Activated CD8-positive, alpha-beta T cell treated with anti-CD3 and anti-CD28 coated beads for 36 hours (primary cell): ENCODE measurements at regions of chr17 and their contacts with region 1.

Region 1: DNA sequence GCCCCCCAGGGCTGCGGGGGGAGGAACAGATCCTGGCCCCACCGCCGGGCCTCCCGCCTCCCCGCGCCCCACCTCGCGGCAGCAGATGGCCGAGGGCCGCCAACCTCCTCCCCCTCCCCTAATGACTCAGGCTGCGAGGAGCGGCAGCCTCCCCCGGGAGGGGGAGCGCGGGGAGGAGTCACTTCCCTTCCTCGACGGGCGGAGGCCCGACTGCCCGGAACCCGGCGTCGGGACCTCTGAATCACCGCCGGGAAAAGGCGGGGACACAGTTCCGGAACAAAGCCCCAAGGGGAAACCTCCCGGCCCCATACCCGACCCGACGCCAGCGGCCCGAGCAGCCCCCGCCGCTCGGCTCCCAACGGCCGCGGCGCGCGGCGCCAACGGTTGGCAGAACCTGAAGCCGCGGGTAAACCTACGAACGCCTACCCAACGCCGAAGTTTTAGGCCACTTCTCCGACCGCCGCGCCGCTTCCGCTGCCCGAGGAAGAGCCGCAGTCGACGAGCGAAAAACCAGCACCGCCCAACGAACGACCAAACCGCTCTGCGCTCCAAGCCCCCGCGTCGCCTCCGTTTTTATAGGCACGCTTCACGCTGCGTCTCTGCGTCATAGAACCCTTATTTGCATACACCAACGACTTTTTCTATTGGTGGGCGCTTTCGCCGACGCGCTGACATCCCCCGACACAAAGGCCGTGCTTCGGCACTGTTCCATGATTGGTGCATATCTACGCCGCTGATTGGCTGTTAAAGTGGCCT is 5.2 kb upstream of the UNK start:
- DNase-seq: peak; percentile 96
- ATAC-seq: peak; percentile 69
- H3K4me3 Mint-ChIP-seq: peak overlapping the region; percentile 88
- H3K27ac Mint-ChIP-seq: peak overlapping the region; percentile 95
- H3K4me1 Mint-ChIP-seq: peaks cover 43% of the 10 kb centered on the region
- H3K27me3 Mint-ChIP-seq: peaks cover 2% of the 10 kb centered on the region
- CTCF ChIP-seq: no peak

Region 2: GRCh38 chr17:75667021-75667790 is 112.2 kb before region 1 on chr17 and contains the starts of genes RECQL5 and SAP30BP:
- CTCF ChIA-PET with region 1: interaction called, 3 read pairs
- POLR2A ChIA-PET with region 1: interaction called, 11 read pairs
- intact Hi-C with region 1: no loop called
- DNase-seq: peak; percentile 99
- ATAC-seq: peak; percentile 100
- H3K4me3 Mint-ChIP-seq: no peak within 1 kb of the TSS
- H3K27ac Mint-ChIP-seq: peak within 1 kb of the TSS; percentile 63
- H3K4me1 Mint-ChIP-seq: peaks cover 37% of the 10 kb centered on the region
- H3K27me3 Mint-ChIP-seq: no peaks in the 10 kb centered on the region
- CTCF ChIP-seq: no peak
- total RNA-seq, gene RECQL5: 33.3 to 34.2 TPM
- total RNA-seq, gene SAP30BP: 73.0 to 75.8 TPM

Region 3: GRCh38 chr17:75795820-75796607 is 16.6 kb after region 1 on chr17:
- CTCF ChIA-PET with region 1: interaction called, 6 read pairs
- POLR2A ChIA-PET with region 1: interaction called, 26 read pairs
- intact Hi-C with region 1: no loop called
- DNase-seq: no peak
- ATAC-seq: no peak
- H3K4me3 Mint-ChIP-seq: no peak overlapping the region
- H3K27ac Mint-ChIP-seq: no peak overlapping the region
- H3K4me1 Mint-ChIP-seq: peaks cover 17% of the 10 kb centered on the region
- H3K27me3 Mint-ChIP-seq: no peaks in the 10 kb centered on the region
- CTCF ChIP-seq: no peak

Region 4: DNA sequence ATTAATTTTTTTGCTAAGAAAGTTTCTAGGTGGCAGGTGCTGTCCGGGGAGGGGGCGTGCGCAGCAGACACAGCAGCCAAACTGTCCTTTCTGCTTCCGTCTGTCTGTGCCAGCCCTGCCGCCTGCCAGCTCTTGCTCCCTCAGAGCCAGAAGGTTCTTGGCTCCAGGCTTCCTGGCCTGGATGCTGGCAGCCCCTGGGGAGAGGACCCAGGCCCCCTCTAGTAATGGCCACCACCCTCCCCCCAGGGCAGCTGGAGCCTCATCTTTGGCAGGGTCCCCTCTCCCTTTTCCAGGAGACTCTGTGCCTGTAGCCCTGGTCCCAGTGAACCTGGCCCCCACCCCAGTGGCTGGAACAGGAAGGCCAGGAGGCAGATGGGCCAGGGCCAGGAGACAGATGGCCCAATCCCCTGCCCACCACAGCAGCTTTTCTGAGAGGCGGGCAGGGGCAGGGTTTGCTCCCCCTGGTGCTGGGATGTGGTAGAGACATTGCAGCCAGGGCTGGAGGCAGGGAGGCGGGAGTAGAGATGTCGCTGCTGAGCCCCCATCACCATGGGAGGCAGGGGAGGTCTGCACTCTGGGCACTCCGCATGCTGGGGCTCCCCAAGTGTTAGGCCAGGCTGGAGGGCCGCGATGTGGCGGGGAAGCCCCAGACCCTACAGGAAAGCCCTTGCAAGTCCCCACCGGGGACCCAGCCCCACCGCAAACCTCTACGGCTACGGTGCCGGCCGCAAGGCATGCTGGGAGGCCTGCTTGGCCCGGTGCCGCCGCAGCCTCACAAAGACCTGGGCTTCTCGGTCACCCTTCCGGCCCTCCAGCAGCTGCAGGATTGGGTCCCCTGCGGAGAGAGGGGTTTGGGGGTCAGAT is 48.1 kb after region 1 on chr17:
- CTCF ChIA-PET with region 1: interaction called, 22 read pairs
- POLR2A ChIA-PET with region 1: interaction called, 53 read pairs
- intact Hi-C with region 1: no loop called
- DNase-seq: peak; percentile 81
- ATAC-seq: peak; percentile 69
- H3K4me3 Mint-ChIP-seq: peak overlapping the region; percentile 54
- H3K27ac Mint-ChIP-seq: peak overlapping the region; percentile 94
- H3K4me1 Mint-ChIP-seq: peaks cover 21% of the 10 kb centered on the region
- H3K27me3 Mint-ChIP-seq: no peaks in the 10 kb centered on the region
- CTCF ChIP-seq: peak; percentile 89

Region 5: GRCh38 chr17:75864448-75864871 is 85.1 kb after region 1 on chr17:
- CTCF ChIA-PET with region 1: interaction called, 10 read pairs
- POLR2A ChIA-PET with region 1: interaction called, 4 read pairs
- intact Hi-C with region 1: no loop called
- DNase-seq: peak; percentile 71
- ATAC-seq: peak; percentile 78
- H3K4me3 Mint-ChIP-seq: no peak overlapping the region
- H3K27ac Mint-ChIP-seq: peak overlapping the region; percentile 78
- H3K4me1 Mint-ChIP-seq: peaks cover 17% of the 10 kb centered on the region
- H3K27me3 Mint-ChIP-seq: no peaks in the 10 kb centered on the region
- CTCF ChIP-seq: no peak